Activated naive CD4-positive, alpha-beta T cell treated with anti-CD3 and anti-CD28 coated beads for 36 hours (primary cell): ENCODE measurements at regions of chr7 and their contacts with region 1.

Region 1: DNA sequence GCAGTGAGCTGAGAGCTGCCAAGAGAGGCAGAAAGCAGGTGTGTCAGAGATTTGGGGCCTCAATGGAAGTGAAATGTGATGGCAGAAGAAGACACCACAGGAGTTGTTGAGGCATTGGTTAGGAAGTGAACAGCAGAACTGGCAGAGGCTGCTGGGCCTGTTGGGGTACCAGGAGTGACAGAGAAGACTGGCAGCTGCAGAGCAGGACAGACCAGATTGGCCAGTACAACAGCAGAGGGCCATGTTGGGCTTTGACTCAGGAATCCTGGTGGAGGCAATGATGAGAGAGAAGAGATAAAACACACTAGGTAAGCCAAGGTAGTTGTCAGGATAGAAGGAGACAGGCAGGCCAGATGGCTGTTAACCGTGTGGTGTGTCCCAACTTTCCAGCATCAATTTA is 19.9 kb upstream of the HERPUD2 start:
- DNase-seq: peak; percentile 23
- H3K4me3 Mint-ChIP-seq: no peak overlapping the region
- H3K27ac Mint-ChIP-seq: no peak overlapping the region
- H3K4me1 Mint-ChIP-seq: peaks cover 2% of the 10 kb centered on the region
- H3K27me3 Mint-ChIP-seq: no peaks in the 10 kb centered on the region

Region 2: GRCh38 chr7:35700865-35701264 is 14.0 kb before region 1 on chr7:
- CTCF ChIA-PET with region 1: interaction called, 16 read pairs
- intact Hi-C with region 1: no loop called
- DNase-seq: no peak
- H3K4me3 Mint-ChIP-seq: no peak overlapping the region
- H3K27ac Mint-ChIP-seq: no peak overlapping the region
- H3K4me1 Mint-ChIP-seq: peaks cover 23% of the 10 kb centered on the region
- H3K27me3 Mint-ChIP-seq: no peaks in the 10 kb centered on the region

Region 3: GRCh38 chr7:35729061-35729783 is 14.4 kb after region 1 on chr7:
- CTCF ChIA-PET with region 1: interaction called, 28 read pairs
- intact Hi-C with region 1: no loop called
- DNase-seq: peak; percentile 47
- H3K4me3 Mint-ChIP-seq: no peak overlapping the region
- H3K27ac Mint-ChIP-seq: no peak overlapping the region
- H3K4me1 Mint-ChIP-seq: peaks cover 41% of the 10 kb centered on the region
- H3K27me3 Mint-ChIP-seq: no peaks in the 10 kb centered on the region

Region 4: GRCh38 chr7:35781200-35781701 is 66.4 kb after region 1 on chr7:
- CTCF ChIA-PET with region 1: no interaction called
- intact Hi-C with region 1: no loop called
- DNase-seq: no peak
- H3K4me3 Mint-ChIP-seq: no peak overlapping the region
- H3K27ac Mint-ChIP-seq: no peak overlapping the region
- H3K4me1 Mint-ChIP-seq: no peaks in the 10 kb centered on the region
- H3K27me3 Mint-ChIP-seq: no peaks in the 10 kb centered on the region

Region 5: DNA sequence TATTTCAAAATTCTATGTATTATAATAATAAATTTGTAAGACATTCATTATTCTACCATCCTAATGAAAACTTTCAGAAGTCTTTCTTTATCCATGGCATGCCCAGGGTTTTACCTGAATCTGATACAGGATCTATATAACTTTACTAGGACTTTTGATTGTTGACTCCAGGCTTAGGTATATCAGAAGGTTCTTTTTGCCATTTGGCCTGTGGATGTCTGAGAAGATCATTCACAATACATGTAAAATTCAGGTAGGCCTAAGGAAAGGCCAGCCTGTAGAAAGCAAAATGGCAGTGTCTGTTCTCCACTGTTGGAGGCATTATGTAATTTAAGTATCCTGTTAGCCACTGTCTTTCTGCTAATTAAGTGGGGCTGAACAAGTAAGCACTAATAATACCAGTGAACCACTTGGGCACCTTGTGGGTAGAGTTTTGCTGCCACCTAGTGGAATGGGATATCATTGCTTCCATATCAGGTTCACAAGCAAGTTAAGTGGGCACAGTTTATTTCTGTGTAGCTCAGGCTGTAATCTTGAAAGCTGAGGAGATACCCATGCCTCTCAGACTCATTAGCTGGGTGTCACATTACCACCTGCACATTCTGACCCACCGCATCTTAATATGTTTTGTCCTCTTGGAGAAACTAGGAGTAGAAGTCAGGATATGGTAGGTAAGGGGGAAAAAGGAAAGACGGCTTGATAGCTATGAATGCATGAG is 191.5 kb after region 1 on chr7:
- CTCF ChIA-PET with region 1: interaction called, 51 read pairs
- intact Hi-C with region 1: no loop called
- DNase-seq: peak; percentile 82
- H3K4me3 Mint-ChIP-seq: no peak overlapping the region
- H3K27ac Mint-ChIP-seq: no peak overlapping the region
- H3K4me1 Mint-ChIP-seq: peaks cover 4% of the 10 kb centered on the region
- H3K27me3 Mint-ChIP-seq: no peaks in the 10 kb centered on the region

Region 6: DNA sequence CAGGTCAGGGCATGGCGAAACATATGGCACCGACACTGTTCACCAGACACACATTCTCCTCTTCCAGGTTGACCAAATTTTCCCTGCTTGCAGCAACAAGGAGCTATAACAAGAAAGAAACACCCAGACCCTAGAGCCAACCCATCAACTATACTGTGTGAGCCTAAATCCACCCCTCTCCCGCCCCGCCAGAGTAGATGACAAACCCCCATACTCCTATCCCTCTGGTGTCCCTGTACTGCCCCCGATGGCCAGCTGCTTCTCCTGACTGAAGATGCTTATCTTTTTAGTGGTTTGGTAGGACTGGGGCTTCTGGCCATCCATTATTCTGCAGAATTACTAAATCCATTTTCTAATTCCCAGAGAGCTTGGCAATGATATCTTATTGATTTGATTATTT is 368.0 kb after region 1 on chr7:
- CTCF ChIA-PET with region 1: no interaction called
- intact Hi-C with region 1: no loop called
- DNase-seq: no peak
- H3K4me3 Mint-ChIP-seq: no peak overlapping the region
- H3K27ac Mint-ChIP-seq: no peak overlapping the region
- H3K4me1 Mint-ChIP-seq: no peaks in the 10 kb centered on the region
- H3K27me3 Mint-ChIP-seq: no peaks in the 10 kb centered on the region